ENCODE measurements at regions of chr3 and their contacts with region 1.

Region 1: DNA sequence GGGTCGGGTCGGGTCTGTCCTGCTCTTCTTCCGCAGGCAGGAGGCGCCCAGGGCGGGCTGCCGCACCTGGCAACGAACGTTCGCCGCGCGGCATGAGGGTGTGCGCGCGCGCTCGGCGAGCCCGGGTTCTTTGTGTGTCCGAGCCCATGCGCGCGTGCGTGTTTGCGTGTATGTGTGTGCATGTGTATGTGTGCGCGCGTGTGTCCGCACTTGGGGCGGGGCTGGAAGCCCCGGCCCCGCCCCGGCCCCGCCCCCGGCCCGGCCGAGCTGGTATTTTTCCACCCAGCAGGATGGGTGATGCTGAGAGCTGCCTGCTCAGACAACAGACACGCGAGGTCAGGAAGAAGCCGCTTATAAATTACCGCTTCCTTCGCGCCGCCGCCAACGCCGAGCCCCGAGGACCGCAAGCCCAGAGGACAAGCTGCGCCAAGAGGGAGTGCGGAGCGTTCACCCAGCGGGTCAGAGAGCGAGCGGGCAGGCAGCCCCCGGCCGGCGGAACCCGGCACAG is at the start of gene SLC6A6:
- DNase-seq: peak; percentile 88 to 95 (median 91)
- H3K4me3 ChIP-seq: peak within 1 kb of the TSS; percentile 72 to 100 (median 84)
- H3K4me3 Mint-ChIP-seq: peak within 1 kb of the TSS; percentile 99
- H3K27ac ChIP-seq: peak within 1 kb of the TSS; percentile 75 to 98
- H3K27ac Mint-ChIP-seq: peak within 1 kb of the TSS; percentile 96 to 99 (median 98)
- H3K4me1 ChIP-seq: peaks cover 59 to 75% of the 10 kb centered on the region in 2 donors
- H3K4me1 Mint-ChIP-seq: peaks cover 73% of the 10 kb centered on the region
- H3K27me3 ChIP-seq: no peaks in the 10 kb centered on the region
- H3K27me3 Mint-ChIP-seq: peaks cover 8 to 15% (median 14%) of the 10 kb centered on the region in 3 donors
- CTCF ChIP-seq: peak; percentile 37
- polyA plus RNA-seq, gene SLC6A6: 18.4 to 136 (median 24.5) TPM

Region 2: DNA sequence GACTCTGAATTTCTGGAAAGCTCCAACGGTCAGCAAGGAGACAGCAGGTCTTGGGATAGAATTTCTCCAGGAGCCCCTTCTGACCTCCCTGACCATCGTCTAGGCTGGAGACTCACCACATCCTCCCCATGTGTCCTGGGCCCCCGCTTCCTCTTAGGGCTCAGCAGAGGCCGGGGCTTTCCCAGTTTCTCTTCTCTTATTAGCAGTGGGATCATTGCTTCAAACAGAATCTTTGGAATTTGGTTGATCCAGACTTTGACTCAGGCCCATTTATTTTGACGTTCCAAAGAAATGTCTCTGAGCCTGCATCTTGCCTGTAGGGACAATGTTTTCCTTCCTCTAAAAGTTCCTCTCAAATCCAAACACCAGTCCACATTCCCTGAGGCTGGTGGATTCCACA is 38.4 kb before region 1 on chr3:
- intact Hi-C with region 1: loop called in 1 of 2 experiments (anchors 5 kb)
- DNase-seq: peak; percentile 33 to 75 (median 54)
- H3K4me3 ChIP-seq: no peak overlapping the region
- H3K4me3 Mint-ChIP-seq: peak overlapping the region in 1 of 2 donors; percentile 39
- H3K27ac ChIP-seq: no peak overlapping the region
- H3K27ac Mint-ChIP-seq: peak overlapping the region in 2 of 7 donors; percentile 10 to 59
- H3K4me1 ChIP-seq: peaks cover 10 to 11% of the 10 kb centered on the region in 2 donors
- H3K4me1 Mint-ChIP-seq: peaks cover 28% of the 10 kb centered on the region
- H3K27me3 ChIP-seq: no peaks in the 10 kb centered on the region
- H3K27me3 Mint-ChIP-seq: peaks cover 5 to 13% (median 10%) of the 10 kb centered on the region in 3 donors
- CTCF ChIP-seq: no peak

Region 3: GRCh38 chr3:14439579-14440518 is 37.5 kb after region 1 on chr3:
- intact Hi-C with region 1: loop called (anchors 5 kb)
- DNase-seq: peak; percentile 87 to 91 (median 90)
- H3K4me3 ChIP-seq: peak overlapping the region in 1 of 3 experiments; percentile 65
- H3K4me3 Mint-ChIP-seq: peak overlapping the region; percentile 65 to 83
- H3K27ac ChIP-seq: peak overlapping the region; percentile 78 to 88
- H3K27ac Mint-ChIP-seq: peak overlapping the region; percentile 94 to 98 (median 97)
- H3K4me1 ChIP-seq: peaks cover 67 to 75% of the 10 kb centered on the region in 2 donors
- H3K4me1 Mint-ChIP-seq: peaks cover 73% of the 10 kb centered on the region
- H3K27me3 ChIP-seq: no peaks in the 10 kb centered on the region
- H3K27me3 Mint-ChIP-seq: no peaks in the 10 kb centered on the region
- CTCF ChIP-seq: no peak